ENCODE measurements at regions of chr2 and their contacts with region 1.

Region 1: DNA sequence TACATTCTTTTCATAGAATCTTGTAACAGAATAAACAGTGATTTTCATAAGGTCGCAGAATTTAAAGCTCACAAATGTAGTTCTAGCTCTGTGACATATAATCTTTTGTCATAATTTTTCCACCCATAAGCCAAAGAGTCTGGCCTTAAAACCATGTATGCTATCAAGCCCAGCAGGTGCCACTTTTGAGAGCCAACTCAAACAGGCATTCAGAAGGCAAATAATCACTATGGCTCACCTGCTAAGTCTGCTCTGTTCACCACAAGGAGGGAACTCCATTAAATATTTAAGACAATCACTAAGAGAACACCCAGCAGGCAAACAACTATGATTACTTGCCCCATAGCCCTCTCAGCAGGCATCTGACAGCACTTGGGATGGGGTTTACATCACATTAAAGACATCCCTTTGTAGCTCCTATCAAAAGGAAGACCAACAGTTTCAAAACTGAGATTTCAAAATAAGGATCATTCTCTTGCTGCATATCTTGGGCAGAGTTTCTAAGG is 241.6 kb downstream of the PDE11A start:
- DNase-seq: no peak
- ATAC-seq: no peak
- H3K4me3 ChIP-seq: no peak overlapping the region
- H3K4me3 Mint-ChIP-seq: no peak overlapping the region
- H3K27ac ChIP-seq: no peak overlapping the region
- H3K27ac Mint-ChIP-seq: no peak overlapping the region
- H3K4me1 ChIP-seq: no peaks in the 10 kb centered on the region
- H3K4me1 Mint-ChIP-seq: no peaks in the 10 kb centered on the region
- H3K27me3 ChIP-seq: peaks cover 0 to 3% of the 10 kb centered on the region in 2 experiments
- H3K27me3 Mint-ChIP-seq: peaks cover 3% of the 10 kb centered on the region
- CTCF ChIP-seq: no peak

Region 2: DNA sequence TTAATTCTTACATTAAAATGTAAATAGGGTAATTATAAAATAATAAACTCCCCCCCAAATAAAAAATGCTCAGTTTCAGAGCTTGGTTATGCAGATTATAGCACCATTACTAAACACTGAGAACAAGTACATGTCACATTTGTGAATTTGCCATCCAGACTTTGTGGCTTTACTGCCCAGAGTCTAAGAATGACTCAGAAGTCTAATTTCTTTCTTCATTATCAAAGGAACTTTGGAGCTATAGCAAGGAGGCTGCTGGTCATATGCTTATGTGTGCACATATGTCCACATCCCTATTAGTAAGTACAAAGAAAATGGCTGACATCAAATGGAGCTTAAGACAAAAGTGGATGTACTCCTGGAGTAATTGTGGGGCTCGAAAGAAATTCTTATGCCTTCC is 1682.2 kb after region 1 on chr2:
- CTCF ChIA-PET with region 1: no interaction called
- POLR2A ChIA-PET with region 1: no interaction called
- intact Hi-C with region 1: loop called in 1 of 2 experiments (anchors 10 kb)
- DNase-seq: no peak
- ATAC-seq: no peak
- H3K4me3 ChIP-seq: no peak overlapping the region
- H3K4me3 Mint-ChIP-seq: no peak overlapping the region
- H3K27ac ChIP-seq: no peak overlapping the region
- H3K27ac Mint-ChIP-seq: no peak overlapping the region
- H3K4me1 ChIP-seq: no peaks in the 10 kb centered on the region
- H3K4me1 Mint-ChIP-seq: no peaks in the 10 kb centered on the region
- H3K27me3 ChIP-seq: no peaks in the 10 kb centered on the region
- H3K27me3 Mint-ChIP-seq: no peaks in the 10 kb centered on the region
- CTCF ChIP-seq: no peak